ENCODE measurements at regions of chr4 and their contacts with region 1.

Region 1: GRCh38 chr4:15882675-15883086 is 55.9 kb downstream of the FGFBP1 start:
- DNase-seq: peak; percentile 79
- ATAC-seq: peak; percentile 97
- H3K4me3 ChIP-seq: no peak overlapping the region
- H3K27ac ChIP-seq: no peak overlapping the region
- H3K4me1 ChIP-seq: no peaks in the 10 kb centered on the region
- H3K27me3 ChIP-seq: no peaks in the 10 kb centered on the region
- CTCF ChIP-seq: peak; percentile 89 to 96 (median 95)
- POLR2A ChIP-seq: no peak
- RAD21 ChIP-seq: peak; percentile 98

Region 2: DNA sequence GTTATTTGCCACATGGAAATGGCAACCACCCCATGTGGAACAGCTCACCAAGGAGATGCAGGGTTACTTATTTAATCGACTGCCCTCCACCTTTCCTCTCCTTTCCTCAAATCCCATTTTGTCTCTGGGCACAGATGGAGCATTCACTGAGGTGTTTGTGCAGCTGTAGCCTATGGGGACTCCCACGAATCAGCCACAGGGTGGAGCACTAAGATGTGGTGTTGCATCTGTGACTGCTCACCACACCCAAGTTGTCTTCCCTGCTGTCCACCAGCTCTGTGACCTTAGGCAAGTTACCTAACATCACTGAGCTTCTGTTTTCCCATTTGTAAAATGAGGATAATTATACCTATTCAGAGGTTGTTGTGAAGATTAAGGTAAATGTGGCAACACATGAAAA is 1132.8 kb before region 1 on chr4:
- CTCF ChIA-PET with region 1: no interaction called
- POLR2A ChIA-PET with region 1: no interaction called
- RAD21 ChIA-PET with region 1: no interaction called
- intact Hi-C with region 1: no loop called
- DNase-seq: no peak
- ATAC-seq: peak; percentile 50; the same call in 1 of the 2 replicates
- H3K4me3 ChIP-seq: no peak overlapping the region
- H3K27ac ChIP-seq: no peak overlapping the region
- H3K4me1 ChIP-seq: no peaks in the 10 kb centered on the region
- H3K27me3 ChIP-seq: no peaks in the 10 kb centered on the region
- CTCF ChIP-seq: 0 out of 6 replicates have a peak, but pooled peaks of 1 of the 3 experiments have one; percentile 19
- POLR2A ChIP-seq: no peak
- RAD21 ChIP-seq: peak; percentile 49

Region 3: DNA sequence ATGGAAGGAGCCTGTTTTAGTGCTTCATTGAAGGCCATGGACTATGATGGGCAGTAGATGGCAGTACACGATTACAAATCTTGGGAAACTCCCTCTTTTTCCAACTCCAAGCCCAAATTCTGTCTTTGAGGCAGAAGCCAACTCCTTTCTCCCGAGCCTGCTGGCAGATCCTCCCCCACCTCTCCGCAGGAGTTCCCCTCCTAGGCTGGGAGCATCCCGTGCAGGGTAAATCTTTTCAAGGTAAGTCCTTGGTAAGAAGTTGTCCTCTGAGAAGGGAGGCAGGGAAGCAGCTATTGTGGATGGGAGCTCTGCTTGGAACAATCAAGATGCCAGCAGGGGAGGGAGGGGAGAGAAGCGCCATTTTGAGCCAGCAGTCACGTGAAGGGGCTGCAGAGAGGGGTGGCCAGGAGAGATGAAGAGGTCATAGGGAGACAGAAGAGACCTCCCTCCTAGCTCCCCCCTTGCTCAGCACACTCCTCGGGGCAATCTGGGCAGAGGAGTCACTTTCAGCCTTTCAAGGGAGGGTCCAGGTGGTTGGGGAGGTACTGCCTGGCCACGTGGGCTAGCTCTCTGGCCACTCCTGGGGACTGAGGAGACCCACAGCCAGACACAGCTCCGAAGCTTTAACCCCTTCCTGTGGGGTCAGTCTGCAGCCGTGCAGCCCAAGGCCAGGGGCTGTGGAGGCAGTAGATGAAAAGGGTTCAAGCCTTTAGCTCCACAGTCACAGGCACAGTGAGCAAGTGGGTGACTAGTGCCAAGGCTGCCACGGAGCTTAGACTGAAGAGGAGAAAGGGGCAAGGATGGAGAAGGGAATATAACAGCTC is 403.4 kb before region 1 on chr4:
- CTCF ChIA-PET with region 1: interaction called, 13 read pairs
- POLR2A ChIA-PET with region 1: no interaction called
- RAD21 ChIA-PET with region 1: interaction called in 1 of 2 experiments, 5 read pairs
- intact Hi-C with region 1: loop called (anchors 5 kb)
- DNase-seq: peak; percentile 82
- ATAC-seq: peak; percentile 87
- H3K4me3 ChIP-seq: peak overlapping the region; percentile 62 to 68
- H3K27ac ChIP-seq: peak overlapping the region; percentile 56
- H3K4me1 ChIP-seq: peaks cover 5 to 11% of the 10 kb centered on the region in 2 experiments
- H3K27me3 ChIP-seq: no peaks in the 10 kb centered on the region
- CTCF ChIP-seq: peak; percentile 64 to 79 (median 74)
- POLR2A ChIP-seq: peak; percentile 70
- RAD21 ChIP-seq: peak; percentile 92

Region 4: DNA sequence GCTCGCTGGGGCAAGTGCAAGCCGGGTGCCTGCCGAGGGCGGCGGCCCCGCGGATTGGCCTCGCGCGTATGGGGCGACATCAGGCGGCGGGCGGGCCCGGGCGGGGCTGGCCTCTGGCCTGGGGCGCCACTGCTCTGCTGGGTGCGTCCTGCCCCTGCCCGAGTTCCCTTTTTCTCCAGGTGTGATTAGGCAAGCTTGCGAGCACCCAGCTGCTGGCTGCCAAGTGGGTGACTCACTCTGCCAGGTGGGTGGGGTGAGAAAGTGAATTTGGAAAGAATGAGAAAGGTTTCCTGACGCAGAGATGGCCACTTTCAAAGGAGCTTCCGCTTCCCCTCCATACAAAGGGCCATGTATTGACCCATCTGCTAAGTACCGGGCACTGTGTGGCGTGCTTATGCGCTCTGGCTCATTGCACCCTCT is 23.4 kb after region 1 on chr4:
- CTCF ChIA-PET with region 1: interaction called, 15 read pairs
- POLR2A ChIA-PET with region 1: no interaction called
- RAD21 ChIA-PET with region 1: no interaction called
- intact Hi-C with region 1: no loop called
- DNase-seq: peak; percentile 95
- ATAC-seq: peak; percentile 95
- H3K4me3 ChIP-seq: peak overlapping the region; percentile 18 to 47
- H3K27ac ChIP-seq: peak overlapping the region; percentile 73
- H3K4me1 ChIP-seq: peaks cover 19 to 32% of the 10 kb centered on the region in 2 experiments
- H3K27me3 ChIP-seq: no peaks in the 10 kb centered on the region
- CTCF ChIP-seq: no peak
- POLR2A ChIP-seq: no peak
- RAD21 ChIP-seq: peak; percentile 43

Region 5: GRCh38 chr4:15956179-15956850 is 73.6 kb after region 1 on chr4:
- CTCF ChIA-PET with region 1: interaction called, 261 read pairs
- POLR2A ChIA-PET with region 1: interaction called, 19 read pairs
- RAD21 ChIA-PET with region 1: interaction called, 57 to 72 read pairs
- intact Hi-C with region 1: loop called (anchors 1 kb)
- DNase-seq: peak; percentile 78
- ATAC-seq: peak; percentile 96
- H3K4me3 ChIP-seq: no peak overlapping the region
- H3K27ac ChIP-seq: no peak overlapping the region
- H3K4me1 ChIP-seq: peaks cover 0 to 7% of the 10 kb centered on the region in 2 experiments; a peak in 3 of 4 replicates
- H3K27me3 ChIP-seq: no peaks in the 10 kb centered on the region
- CTCF ChIP-seq: peak; percentile 92 to 97 (median 95)
- POLR2A ChIP-seq: no peak
- RAD21 ChIP-seq: peak; percentile 100

Region 6: DNA sequence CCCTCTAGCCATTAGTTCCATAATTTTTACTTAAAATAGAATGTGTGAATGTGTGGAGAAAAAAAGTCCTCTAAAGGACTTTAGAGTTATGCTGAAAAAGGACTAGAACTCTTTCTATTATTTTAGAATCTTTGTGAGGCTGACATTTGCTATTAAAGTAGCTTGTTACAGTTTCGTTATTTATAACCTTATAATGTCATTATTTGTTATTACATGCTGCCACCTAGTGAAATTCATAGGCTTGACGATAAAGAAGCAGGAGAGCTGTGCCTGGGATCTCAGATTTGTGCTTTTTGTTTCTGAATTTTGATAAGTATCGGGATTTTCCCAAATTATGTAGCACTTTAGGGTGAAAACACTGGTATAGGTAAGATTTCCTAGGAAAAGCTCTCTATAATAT is 382.1 kb after region 1 on chr4:
- CTCF ChIA-PET with region 1: interaction called, 13 read pairs
- POLR2A ChIA-PET with region 1: no interaction called
- RAD21 ChIA-PET with region 1: no interaction called
- intact Hi-C with region 1: no loop called
- DNase-seq: peak; percentile 35
- ATAC-seq: no peak
- H3K4me3 ChIP-seq: no peak overlapping the region
- H3K27ac ChIP-seq: no peak overlapping the region
- H3K4me1 ChIP-seq: no peaks in the 10 kb centered on the region
- H3K27me3 ChIP-seq: no peaks in the 10 kb centered on the region
- CTCF ChIP-seq: peak; percentile 22 to 74 (median 61); a peak in 3 of 6 replicates
- POLR2A ChIP-seq: no peak
- RAD21 ChIP-seq: peak; percentile 76

Measured in HCT116 (cell line).